ENCODE measurements at regions of chr12 and their contacts with region 1.

Region 1: DNA sequence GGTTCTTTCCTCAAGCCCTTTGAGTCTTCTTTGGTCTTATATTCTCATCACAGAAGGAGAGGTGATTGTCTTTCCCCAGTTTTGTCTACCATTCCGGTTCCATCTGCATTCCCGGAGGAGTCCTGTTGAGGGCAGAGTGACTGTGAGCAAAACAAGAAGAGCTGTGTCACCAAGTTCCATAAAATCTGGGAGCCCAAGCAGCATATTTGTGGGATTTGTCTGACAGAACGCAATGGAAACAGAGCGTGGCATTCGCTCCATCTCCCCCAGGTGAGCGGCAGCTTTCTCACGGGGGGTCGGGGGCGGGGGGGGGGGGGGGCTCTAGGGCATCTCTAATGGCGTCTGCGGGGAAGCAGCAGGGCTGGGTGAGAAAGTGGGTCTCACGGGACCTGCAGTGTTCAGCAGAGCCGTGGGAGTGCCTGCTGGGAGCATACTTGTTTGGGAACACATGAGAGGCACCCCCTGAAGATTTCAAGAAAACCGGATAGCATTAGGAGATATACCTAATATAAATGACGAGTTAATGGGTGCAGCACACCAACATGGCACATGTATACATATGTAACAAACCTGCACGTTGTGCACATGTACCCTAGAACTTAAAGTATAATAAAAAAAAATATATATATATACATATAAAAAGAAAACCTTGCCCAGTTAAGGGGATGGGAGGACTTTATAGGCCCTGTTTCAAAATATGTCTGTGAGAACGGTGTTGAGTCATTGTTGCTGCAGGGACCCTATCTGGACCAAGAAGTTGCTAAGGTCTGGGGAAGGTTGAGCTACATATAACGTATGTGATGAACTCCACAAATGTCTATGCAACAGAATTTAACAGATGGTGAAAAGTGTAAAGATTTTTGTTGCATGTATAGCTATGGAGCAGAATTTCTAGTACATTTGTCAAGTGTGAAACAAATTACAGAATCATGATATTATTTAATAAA is 59.4 kb downstream of the TBC1D30 start:
- DNase-seq: peak; percentile 26

Region 2: GRCh38 chr12:64801381-64801780 is 82.5 kb before region 1 on chr12:
- CTCF ChIA-PET with region 1: interaction called, 12 read pairs
- POLR2A ChIA-PET with region 1: no interaction called
- DNase-seq: peak; percentile 21

Region 3: DNA sequence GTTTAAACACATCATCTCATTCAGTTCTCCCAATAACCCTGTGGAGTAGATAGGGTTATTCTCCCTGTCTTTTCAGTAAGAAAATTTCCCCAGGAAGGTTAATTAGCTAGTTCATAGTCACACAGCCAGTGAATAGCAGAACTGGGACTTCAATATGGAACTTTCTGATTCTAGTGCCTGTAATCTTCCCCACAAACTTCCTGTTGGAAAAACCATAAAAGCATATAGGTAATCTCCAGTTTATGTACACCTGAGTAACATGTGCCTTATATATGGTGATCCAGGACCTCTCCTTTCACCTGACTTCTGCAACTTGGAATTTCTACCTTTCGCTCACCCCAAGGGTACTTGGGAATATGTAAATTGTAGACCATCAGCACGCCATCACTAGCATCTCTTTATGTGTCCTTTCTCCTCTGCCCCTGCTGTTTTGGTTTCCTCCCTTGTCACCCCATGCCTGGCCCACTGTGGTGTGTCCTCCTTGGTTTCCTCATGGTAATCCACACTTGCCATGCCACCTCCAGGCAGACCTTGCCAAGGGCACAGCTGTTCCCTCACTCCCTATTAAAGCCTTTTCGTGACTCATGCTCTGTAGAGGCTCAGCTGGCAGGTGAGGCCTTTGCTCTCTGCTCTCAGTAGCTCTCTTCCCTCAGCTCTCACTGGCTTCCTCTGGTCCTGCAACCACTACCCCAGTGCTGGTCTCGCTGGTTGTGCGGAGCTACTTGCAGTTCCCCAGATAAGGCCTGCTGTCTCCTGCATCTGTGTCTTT is 42.7 kb before region 1 on chr12:
- CTCF ChIA-PET with region 1: no interaction called
- POLR2A ChIA-PET with region 1: no interaction called
- DNase-seq: no peak

Measured in HEK293T (cell line).